Heart left ventricle (tissue), 16 donors: ENCODE measurements at regions of chr3 and their contacts with region 1.

Region 1: DNA sequence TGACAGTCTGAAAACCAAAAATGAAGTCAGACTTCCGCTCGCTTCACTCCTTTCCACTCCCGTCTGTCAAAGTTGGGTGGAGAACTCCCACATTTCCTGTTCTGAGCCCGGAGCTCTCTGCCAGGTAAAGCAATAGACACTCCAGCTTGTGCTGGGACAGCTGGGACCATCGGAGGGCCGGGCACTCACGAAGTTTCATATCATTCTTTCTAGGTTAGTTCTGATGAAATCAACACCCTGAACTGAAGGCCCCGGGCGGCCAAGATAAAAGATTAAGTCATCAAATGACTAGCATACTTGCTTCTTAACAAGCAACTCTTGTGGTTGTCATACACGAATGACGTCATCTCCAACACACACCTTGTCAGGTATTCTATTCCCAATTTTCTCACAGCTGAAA is 42.1 kb downstream of the MAGI1 start:
- DNase-seq: peak in 2 of 5 donors; percentile 37 to 43
- ATAC-seq: peak in 3 of 4 donors; percentile 41 to 65 (median 52)
- H3K4me3 ChIP-seq: no peak overlapping the region
- H3K27ac ChIP-seq: peak overlapping the region in 1 of 12 donors; percentile 1
- H3K4me1 ChIP-seq: peaks cover 0 to 71% (median 36%) of the 10 kb centered on the region in 12 donors
- H3K27me3 ChIP-seq: no peaks in the 10 kb centered on the region
- CTCF ChIP-seq: no peak
- POLR2A ChIP-seq: no peak

Region 2: DNA sequence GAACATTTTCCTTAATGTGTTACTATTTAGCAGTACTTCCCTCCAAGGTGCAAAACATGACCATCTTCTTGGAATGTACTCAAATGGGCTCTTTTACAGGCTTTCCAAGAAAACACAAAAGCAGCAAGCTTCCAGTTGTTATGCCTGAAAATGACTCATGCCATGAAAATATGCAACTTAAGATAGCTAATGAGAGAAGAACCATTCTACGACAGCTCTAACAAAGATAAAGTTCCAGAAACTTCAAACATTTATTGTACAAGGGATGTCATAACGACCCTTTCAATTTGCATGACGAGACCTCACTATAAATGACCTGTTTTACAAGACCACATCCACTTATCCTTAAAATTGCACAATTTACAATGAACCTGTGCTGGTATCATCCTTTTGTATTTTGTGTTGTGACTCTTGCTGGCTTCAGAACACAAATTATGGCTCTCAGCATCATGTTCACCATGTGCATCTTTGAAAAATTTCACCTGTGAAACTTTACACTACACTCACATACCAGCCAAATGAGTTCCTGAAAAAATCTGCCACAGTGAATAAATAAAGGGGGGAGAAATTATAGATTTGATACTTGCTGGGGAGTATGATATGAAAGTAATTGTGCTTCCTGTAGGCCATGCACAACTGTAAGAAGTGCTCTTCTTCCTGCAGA is 391.6 kb before region 1 on chr3:
- intact Hi-C with region 1: no loop called
- DNase-seq: no peak
- ATAC-seq: no peak
- H3K4me3 ChIP-seq: no peak overlapping the region
- H3K27ac ChIP-seq: no peak overlapping the region
- H3K4me1 ChIP-seq: peaks cover 0 to 25% (median 16%) of the 10 kb centered on the region in 12 donors
- H3K27me3 ChIP-seq: no peaks in the 10 kb centered on the region
- CTCF ChIP-seq: no peak
- POLR2A ChIP-seq: no peak

Region 3: GRCh38 chr3:65714134-65714533 is 282.5 kb before region 1 on chr3:
- intact Hi-C with region 1: no loop called
- DNase-seq: peak in 1 of 5 donors; percentile 59
- ATAC-seq: peak; percentile 80 to 94 (median 91)
- H3K4me3 ChIP-seq: no peak overlapping the region
- H3K27ac ChIP-seq: peak overlapping the region in 4 of 12 donors; percentile 18 to 38 (median 30)
- H3K4me1 ChIP-seq: peaks cover 0 to 51% (median 19%) of the 10 kb centered on the region in 12 donors
- H3K27me3 ChIP-seq: no peaks in the 10 kb centered on the region
- CTCF ChIP-seq: no peak
- POLR2A ChIP-seq: no peak

Region 4: GRCh38 chr3:65806600-65806999 is 190.0 kb before region 1 on chr3:
- intact Hi-C with region 1: no loop called
- DNase-seq: no peak
- ATAC-seq: no peak
- H3K4me3 ChIP-seq: no peak overlapping the region
- H3K27ac ChIP-seq: no peak overlapping the region
- H3K4me1 ChIP-seq: peaks cover 0 to 27% (median 13%) of the 10 kb centered on the region in 12 donors
- H3K27me3 ChIP-seq: no peaks in the 10 kb centered on the region
- CTCF ChIP-seq: peak in 1 of 12 donors; percentile 18
- POLR2A ChIP-seq: no peak

Region 5: GRCh38 chr3:65936908-65937638 is 59.5 kb before region 1 on chr3:
- intact Hi-C with region 1: loop called in 1 of 10 experiments (anchors 5 kb)
- DNase-seq: peak in 3 of 5 donors; percentile 37 to 49 (median 42)
- ATAC-seq: peak; percentile 44 to 69 (median 56)
- H3K4me3 ChIP-seq: no peak overlapping the region
- H3K27ac ChIP-seq: peak overlapping the region in 10 of 12 donors; percentile 4 to 61 (median 48)
- H3K4me1 ChIP-seq: peaks cover 0 to 57% (median 35%) of the 10 kb centered on the region in 12 donors
- H3K27me3 ChIP-seq: no peaks in the 10 kb centered on the region
- CTCF ChIP-seq: no peak
- POLR2A ChIP-seq: no peak

Region 6: DNA sequence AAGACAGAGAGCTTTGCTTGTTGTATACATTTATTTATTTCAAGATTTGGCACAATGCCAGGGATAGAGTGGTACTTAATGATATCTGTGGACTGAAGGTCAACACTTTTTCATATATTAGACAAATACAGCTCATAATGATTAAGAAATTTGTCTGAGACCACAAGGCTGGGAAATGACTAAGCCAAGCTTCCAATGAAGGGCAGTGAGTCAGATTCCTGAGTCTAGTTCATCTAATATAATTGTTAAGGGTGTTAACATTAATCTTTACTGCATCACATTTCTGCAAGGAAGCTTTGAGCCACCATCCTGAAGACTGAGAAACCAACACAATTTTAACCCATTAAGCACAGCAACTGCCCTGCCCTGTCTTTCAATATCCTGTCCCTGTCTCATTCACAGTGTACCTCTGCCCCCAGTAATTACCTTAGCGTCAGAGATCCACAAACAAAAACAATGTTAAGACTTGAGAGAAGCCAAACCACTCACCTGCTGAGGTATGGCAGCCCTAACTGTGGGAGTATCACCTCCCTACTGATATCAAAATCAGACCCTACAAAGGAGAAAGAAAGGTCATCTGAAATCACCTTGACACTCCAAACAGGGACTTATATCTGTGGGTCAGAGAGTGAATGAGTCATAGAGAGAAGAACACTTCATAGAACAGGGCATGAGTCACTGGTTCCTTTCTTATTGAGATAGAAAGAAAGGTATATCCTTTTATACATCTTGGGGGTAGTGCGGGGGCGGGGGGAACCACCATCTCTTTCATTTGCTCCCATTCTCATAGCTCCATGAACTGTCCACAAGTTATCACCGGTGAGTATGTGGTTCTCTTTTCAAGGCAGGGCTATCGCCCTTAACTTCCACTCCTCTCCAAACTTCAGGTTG is 32.6 kb before region 1 on chr3:
- intact Hi-C with region 1: loop called in 1 of 10 experiments (anchors 5 kb)
- DNase-seq: no peak
- ATAC-seq: peak in 3 of 4 donors; percentile 51 to 70 (median 53)
- H3K4me3 ChIP-seq: no peak overlapping the region
- H3K27ac ChIP-seq: peak overlapping the region in 4 of 12 donors; percentile 8 to 54 (median 34)
- H3K4me1 ChIP-seq: peaks cover 0 to 65% (median 31%) of the 10 kb centered on the region in 12 donors
- H3K27me3 ChIP-seq: no peaks in the 10 kb centered on the region
- CTCF ChIP-seq: no peak
- POLR2A ChIP-seq: no peak

Region 7: DNA sequence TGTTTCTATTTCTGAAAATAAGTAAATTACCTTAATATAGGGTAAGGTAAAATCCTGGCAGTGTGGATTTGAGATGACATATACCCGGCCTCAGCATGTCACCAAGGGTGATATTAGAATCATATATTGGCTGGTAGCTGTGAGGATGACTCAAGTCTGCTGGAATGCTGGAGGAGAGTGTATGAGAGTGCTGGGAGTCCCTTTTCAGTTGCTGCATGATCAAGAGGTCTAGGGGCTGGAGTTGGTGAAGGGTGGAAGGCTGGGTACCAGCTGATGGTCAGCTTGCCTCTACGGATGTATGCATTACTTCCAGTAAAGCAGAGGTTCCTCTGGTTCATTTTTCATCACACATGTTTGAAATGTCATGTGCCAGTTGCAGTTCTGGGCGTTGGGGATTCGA is 264.8 kb after region 1 on chr3:
- intact Hi-C with region 1: no loop called
- DNase-seq: no peak
- ATAC-seq: peak; percentile 32 to 73 (median 66)
- H3K4me3 ChIP-seq: no peak overlapping the region
- H3K27ac ChIP-seq: no peak overlapping the region
- H3K4me1 ChIP-seq: peaks cover 0 to 24% (median 4%) of the 10 kb centered on the region in 12 donors
- H3K27me3 ChIP-seq: no peaks in the 10 kb centered on the region
- CTCF ChIP-seq: no peak
- POLR2A ChIP-seq: no peak